Stomach (tissue), 19 donors: ENCODE measurements at regions of chr4 and their contacts with region 1.

Region 1: GRCh38 chr4:6574747-6575502 is at the start of gene MAN2B2:
- DNase-seq: peak; percentile 93 to 96
- H3K4me3 ChIP-seq: peak within 1 kb of the TSS; percentile 79 to 88 (median 86)
- H3K27ac ChIP-seq: peak within 1 kb of the TSS; percentile 72 to 88 (median 82)
- H3K4me1 ChIP-seq: peaks cover 19 to 34% (median 29%) of the 10 kb centered on the region in 4 donors
- H3K27me3 ChIP-seq: no peaks in the 10 kb centered on the region
- CTCF ChIP-seq: no peak
- EP300 ChIP-seq: no peak
- POLR2A ChIP-seq: peak in 1 of 4 donors; percentile 50
- total RNA-seq, gene MAN2B2: 9.0 to 49.4 (median 28.6) TPM

Region 2: DNA sequence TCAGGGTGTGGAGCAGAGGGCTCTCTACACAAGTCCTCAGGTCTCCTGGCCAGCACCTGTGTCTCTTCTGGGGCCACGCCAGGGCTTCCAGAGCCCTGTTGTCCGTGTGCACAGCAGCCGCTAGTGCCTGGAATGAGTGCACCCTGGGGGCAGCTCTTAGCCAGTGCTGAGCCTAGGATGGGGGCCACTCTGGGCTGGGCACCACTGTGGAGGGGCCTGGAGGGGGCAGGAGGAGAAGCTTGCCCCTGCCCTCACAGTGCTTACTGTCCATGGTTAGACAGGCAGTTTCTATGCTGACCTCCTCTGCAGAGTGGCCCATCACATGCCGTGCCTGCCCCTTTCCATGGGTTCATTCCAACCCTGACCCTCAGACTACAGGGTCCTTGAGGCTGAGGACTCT is 535.6 kb after region 1 on chr4:
- intact Hi-C with region 1: loop called (anchors 10 kb)
- DNase-seq: no peak
- H3K4me3 ChIP-seq: no peak overlapping the region
- H3K27ac ChIP-seq: no peak overlapping the region
- H3K4me1 ChIP-seq: peaks cover 0 to under 1% (median 0%) of the 10 kb centered on the region in 4 donors
- H3K27me3 ChIP-seq: no peaks in the 10 kb centered on the region
- CTCF ChIP-seq: no peak
- EP300 ChIP-seq: no peak
- POLR2A ChIP-seq: no peak